HepG2 (cell line): ENCODE measurements at regions of chr9 and their contacts with region 1.

Region 1: GRCh38 chr9:111149016-111149759 is 110.9 kb upstream of the LPAR1 start:
- DNase-seq: peak; percentile 5
- ATAC-seq: peak; percentile 67
- H3K4me3 ChIP-seq: no peak overlapping the region
- H3K27ac ChIP-seq: no peak overlapping the region
- H3K4me1 ChIP-seq: no peaks in the 10 kb centered on the region
- H3K27me3 ChIP-seq: peaks cover 0 to 3% of the 10 kb centered on the region in 2 experiments; a peak in 1 of 5 replicates
- CTCF ChIP-seq: peak; percentile 31; the same call in 1 of the 2 replicates
- EP300 ChIP-seq: no peak
- POLR2A ChIP-seq: no peak
- RAD21 ChIP-seq: no peak

Region 2: DNA sequence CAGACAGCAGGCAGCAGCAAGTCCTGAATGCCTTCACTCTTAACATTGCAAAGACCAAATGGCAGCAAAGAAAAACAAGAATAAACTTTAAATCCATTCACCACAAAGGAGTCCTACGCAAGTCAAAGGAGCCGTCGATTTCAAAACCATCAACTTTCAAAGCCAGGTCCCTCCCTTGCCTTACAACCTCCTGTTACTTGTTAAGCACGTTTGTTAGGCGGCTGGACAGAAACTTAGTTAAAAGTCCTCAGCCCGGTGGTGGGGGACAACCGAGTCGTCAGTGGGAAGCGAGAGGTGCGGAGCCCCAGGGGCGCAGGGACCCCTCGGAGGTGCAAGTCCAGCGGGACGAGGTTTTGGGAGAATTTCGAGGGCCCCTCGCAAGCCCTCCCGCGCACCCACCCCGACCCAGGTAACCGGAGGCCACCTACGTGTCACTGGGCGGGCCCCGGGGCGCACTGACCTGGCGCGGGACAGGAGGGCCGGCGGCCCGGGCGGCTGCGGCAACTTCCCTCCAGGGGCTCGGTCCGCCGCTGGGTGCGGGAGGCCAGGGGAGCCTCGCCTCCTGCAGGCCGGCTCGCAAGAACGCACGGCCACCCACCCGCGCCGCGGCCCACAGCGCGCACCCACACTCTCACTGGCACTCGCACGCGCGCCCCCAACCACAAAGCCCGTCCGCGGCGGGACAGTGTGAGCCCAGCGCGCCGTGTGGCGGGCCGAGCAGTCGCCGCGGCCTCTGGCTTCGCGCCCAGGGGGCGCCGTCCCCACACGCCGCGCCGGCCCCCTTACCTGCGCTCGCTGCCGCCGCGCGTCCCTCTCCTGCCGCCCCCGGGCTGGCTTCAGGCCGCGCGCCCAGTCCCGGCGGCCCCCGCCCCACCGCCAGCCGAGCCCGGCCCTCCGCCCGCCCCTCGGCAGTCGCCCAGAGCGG is 111.5 kb before region 1 on chr9:
- CTCF ChIA-PET with region 1: no interaction called
- POLR2A ChIA-PET with region 1: no interaction called
- in situ Hi-C with region 1: no loop called
- intact Hi-C with region 1: loop called (anchors 1 kb)
- DNase-seq: peak; percentile 6
- ATAC-seq: peak; percentile 96
- H3K4me3 ChIP-seq: peak overlapping the region; percentile 32 to 69 (median 49); a peak in 5 of 6 replicates
- H3K27ac ChIP-seq: no peak overlapping the region
- H3K4me1 ChIP-seq: peaks cover 22% of the 10 kb centered on the region
- H3K27me3 ChIP-seq: peaks cover 7 to 44% of the 10 kb centered on the region in 2 experiments
- CTCF ChIP-seq: peak; percentile 56; the same call in 1 of the 2 replicates
- EP300 ChIP-seq: no peak
- POLR2A ChIP-seq: no peak
- RAD21 ChIP-seq: peak; percentile 69

Region 3: DNA sequence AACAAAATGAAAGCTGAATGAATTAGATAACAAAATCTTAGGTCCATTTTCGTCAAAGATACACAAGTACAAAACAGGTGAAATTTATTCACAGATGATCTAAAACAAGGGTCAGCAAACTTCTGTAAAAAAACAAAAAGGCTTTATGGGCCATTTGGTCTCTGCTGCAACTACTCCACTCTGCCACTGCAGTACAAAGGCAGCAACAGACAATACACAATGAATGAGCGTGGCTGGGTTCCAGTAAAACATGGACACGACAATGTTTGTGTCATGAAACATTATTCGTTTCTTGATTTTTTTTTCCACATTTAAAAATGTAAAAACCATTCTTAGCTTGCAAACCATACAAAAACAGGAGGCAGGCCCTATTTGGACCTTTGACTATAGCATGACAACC is 263.1 kb after region 1 on chr9:
- CTCF ChIA-PET with region 1: no interaction called
- POLR2A ChIA-PET with region 1: no interaction called
- in situ Hi-C with region 1: no loop called
- intact Hi-C with region 1: no loop called
- DNase-seq: no peak
- ATAC-seq: no peak
- H3K4me3 ChIP-seq: no peak overlapping the region
- H3K27ac ChIP-seq: no peak overlapping the region
- H3K4me1 ChIP-seq: no peaks in the 10 kb centered on the region
- H3K27me3 ChIP-seq: no peaks in the 10 kb centered on the region
- CTCF ChIP-seq: no peak
- EP300 ChIP-seq: no peak
- POLR2A ChIP-seq: no peak
- RAD21 ChIP-seq: no peak